Activated CD4-positive, alpha-beta T cell treated with anti-CD3 and anti-CD28 coated beads for 36 hours (primary cell): ENCODE measurements at regions of chr11 and their contacts with region 1.

Region 1: DNA sequence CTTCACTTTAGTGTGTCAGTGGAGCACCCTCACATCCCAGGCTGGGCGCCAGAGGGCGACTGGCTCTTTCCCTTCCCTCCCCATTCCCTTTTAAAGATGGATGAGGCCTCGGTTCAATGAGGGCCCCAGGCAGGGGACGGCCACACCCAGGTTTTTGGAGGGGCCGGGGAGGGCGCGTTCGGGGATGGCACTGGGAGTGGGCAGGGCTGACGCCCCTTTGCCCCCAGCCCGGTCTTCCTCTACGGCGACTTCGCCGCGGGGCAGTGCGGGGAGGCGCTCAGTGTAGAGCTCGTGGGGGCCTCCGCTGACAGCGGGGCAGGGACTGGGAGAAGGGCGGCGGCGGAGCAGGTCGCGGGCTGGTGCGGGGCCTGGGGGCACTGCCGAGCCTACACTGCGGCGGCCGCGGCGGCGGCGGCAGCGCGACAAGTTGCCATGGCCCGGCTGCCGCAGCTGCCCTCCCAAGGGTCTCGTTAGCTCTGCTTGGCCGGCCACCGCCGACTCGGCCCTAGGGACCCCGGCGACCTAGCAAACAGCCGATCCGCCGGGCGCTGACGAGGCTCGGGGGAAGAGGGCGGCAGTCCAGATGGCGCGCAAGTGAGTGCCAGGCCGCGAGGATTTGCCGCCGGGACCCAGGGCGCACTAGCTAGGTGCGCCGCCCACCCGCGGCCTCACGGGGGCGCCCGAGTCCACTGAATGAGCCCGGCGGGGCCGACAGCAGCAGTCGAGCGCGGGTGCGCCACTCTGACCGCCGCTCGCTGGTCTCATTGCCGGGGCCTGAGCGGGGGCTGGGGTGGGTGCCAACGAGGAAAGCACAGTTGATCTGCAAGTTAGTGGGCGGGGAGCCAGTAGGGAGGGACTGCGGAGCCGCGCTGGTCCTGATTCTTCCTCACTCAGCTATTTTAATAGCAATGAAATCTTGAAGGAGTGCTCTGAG is 92.7 kb downstream of the RRM1 start:
- DNase-seq: peak; percentile 92
- ATAC-seq: peak; percentile 95
- H3K4me3 Mint-ChIP-seq: peak overlapping the region; percentile 60
- H3K27ac Mint-ChIP-seq: no peak overlapping the region
- H3K4me1 Mint-ChIP-seq: peaks cover 3% of the 10 kb centered on the region
- H3K27me3 Mint-ChIP-seq: no peaks in the 10 kb centered on the region

Region 2: GRCh38 chr11:4388221-4388620 is 200.9 kb after region 1 on chr11:
- CTCF ChIA-PET with region 1: interaction called, 11 read pairs
- POLR2A ChIA-PET with region 1: no interaction called
- intact Hi-C with region 1: loop called (anchors 1 to 10 kb)
- DNase-seq: no peak
- ATAC-seq: no peak
- H3K4me3 Mint-ChIP-seq: no peak overlapping the region
- H3K27ac Mint-ChIP-seq: no peak overlapping the region
- H3K4me1 Mint-ChIP-seq: peaks cover 25% of the 10 kb centered on the region
- H3K27me3 Mint-ChIP-seq: no peaks in the 10 kb centered on the region

Region 3: DNA sequence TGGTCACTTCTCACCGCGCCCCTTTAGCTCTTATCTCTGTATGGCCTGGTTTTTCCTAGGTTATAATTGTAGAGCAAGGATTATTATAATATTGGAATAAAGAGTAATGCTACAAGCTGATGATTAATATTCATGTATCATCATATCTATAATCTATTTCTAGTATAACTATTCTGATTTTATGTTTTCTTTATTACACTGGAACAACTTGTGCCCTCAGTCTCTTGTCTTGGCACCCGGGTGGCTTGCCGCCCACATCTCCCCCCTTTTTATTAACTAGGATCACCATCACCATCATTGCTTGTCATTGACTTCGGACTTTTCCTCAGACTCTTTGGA is 306.1 kb after region 1 on chr11:
- CTCF ChIA-PET with region 1: interaction called, 13 read pairs
- POLR2A ChIA-PET with region 1: no interaction called
- intact Hi-C with region 1: loop called (anchors 1 kb)
- DNase-seq: no peak
- ATAC-seq: no peak
- H3K4me3 Mint-ChIP-seq: no peak overlapping the region
- H3K27ac Mint-ChIP-seq: no peak overlapping the region
- H3K4me1 Mint-ChIP-seq: peaks cover 10% of the 10 kb centered on the region
- H3K27me3 Mint-ChIP-seq: peaks cover 14% of the 10 kb centered on the region

Region 4: GRCh38 chr11:4551346-4551979 is 364.1 kb after region 1 on chr11:
- CTCF ChIA-PET with region 1: interaction called, 10 read pairs
- POLR2A ChIA-PET with region 1: no interaction called
- intact Hi-C with region 1: no loop called
- DNase-seq: no peak
- ATAC-seq: no peak
- H3K4me3 Mint-ChIP-seq: no peak overlapping the region
- H3K27ac Mint-ChIP-seq: no peak overlapping the region
- H3K4me1 Mint-ChIP-seq: no peaks in the 10 kb centered on the region
- H3K27me3 Mint-ChIP-seq: peaks cover 18% of the 10 kb centered on the region

Region 5: GRCh38 chr11:4636962-4637661 is 449.8 kb after region 1 on chr11 and contains the start of gene OR51D1:
- CTCF ChIA-PET with region 1: interaction called, 11 read pairs
- POLR2A ChIA-PET with region 1: no interaction called
- intact Hi-C with region 1: loop called in 1 of 2 experiments (anchors 5 kb)
- DNase-seq: peak; percentile 84
- ATAC-seq: peak; percentile 99
- H3K4me3 Mint-ChIP-seq: no peak within 1 kb of the TSS
- H3K27ac Mint-ChIP-seq: no peak within 1 kb of the TSS
- H3K4me1 Mint-ChIP-seq: no peaks in the 10 kb centered on the region
- H3K27me3 Mint-ChIP-seq: peaks cover 9% of the 10 kb centered on the region
- total RNA-seq, gene OR51D1: not detected

Region 6: GRCh38 chr11:5380740-5381342 is 1193.5 kb after region 1 on chr11:
- CTCF ChIA-PET with region 1: interaction called, 3 read pairs
- POLR2A ChIA-PET with region 1: no interaction called
- intact Hi-C with region 1: loop called in 1 of 2 experiments (anchors 1 kb)
- DNase-seq: peak; percentile 54
- ATAC-seq: peak; percentile 55
- H3K4me3 Mint-ChIP-seq: no peak overlapping the region
- H3K27ac Mint-ChIP-seq: no peak overlapping the region
- H3K4me1 Mint-ChIP-seq: no peaks in the 10 kb centered on the region
- H3K27me3 Mint-ChIP-seq: no peaks in the 10 kb centered on the region